ENCODE measurements at regions of chr10 and their contacts with region 1.

Region 1: DNA sequence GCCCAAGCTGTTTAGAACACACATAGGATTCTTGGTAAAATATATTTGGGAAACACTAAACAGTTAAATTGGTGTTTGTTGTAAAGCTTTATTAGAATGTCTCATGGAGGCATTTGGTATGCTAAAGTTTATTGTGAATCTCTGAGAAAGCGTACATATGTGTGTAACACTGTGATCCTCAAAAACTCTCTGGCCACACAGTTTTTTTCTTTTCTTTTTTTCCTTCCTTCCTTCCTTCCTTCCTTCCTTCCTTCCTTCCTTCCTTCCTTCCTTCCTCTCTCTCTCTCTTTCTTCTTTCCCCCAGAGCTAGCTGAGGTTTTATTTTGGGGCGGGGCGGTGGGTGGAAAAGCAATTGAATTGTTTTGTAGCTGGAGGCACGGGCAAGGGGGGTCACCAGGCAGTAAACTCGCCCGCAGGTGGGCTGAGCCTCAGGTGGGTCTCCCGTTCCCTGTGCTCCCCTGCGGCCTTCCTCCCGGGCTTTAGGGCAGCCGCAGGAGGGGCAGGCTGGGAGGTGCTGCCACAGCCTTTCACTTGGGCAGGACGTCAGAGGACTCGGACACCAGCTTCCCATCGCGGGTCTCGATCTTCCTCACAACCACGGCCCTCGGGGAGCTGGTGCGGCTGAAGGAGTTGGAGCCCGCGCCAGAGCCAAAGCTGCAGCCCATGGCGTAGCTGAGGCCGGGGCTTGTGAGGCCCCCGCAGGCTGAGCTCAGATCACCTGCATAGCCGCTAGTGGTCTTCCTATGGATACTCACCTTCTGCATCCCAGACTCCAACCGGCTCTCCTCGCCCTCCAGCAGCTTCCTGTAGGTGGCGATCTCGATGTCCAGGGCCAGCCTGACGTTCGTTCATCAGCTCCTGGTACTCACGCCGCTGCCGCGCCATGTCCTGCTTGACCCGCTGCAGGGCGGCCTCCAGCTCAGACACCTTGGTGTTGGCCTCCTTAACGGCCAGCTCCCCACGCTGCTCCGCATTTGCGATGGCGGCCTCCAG is 459.0 kb downstream of the GATA3 start:
- DNase-seq: peak; percentile 9 to 76
- H3K4me3 ChIP-seq: no peak overlapping the region
- H3K27ac ChIP-seq: no peak overlapping the region
- H3K4me1 ChIP-seq: peaks cover 0 to 9% (median 0%) of the 10 kb centered on the region in 4 experiments; a peak in 4 of 7 replicates
- H3K27me3 ChIP-seq: no peaks in the 10 kb centered on the region
- CTCF ChIP-seq: peak; percentile 55 to 75 (median 62)
- EP300 ChIP-seq: no peak
- POLR2A ChIP-seq: no peak
- RAD21 ChIP-seq: peak; percentile 56 to 66

Region 2: GRCh38 chr10:8502573-8502972 is 10.9 kb before region 1 on chr10:
- CTCF ChIA-PET with region 1: interaction called, 27 read pairs
- POLR2A ChIA-PET with region 1: no interaction called
- DNase-seq: no peak
- H3K4me3 ChIP-seq: no peak overlapping the region
- H3K27ac ChIP-seq: no peak overlapping the region
- H3K4me1 ChIP-seq: peaks cover 2 to 14% (median 11%) of the 10 kb centered on the region in 4 experiments
- H3K27me3 ChIP-seq: no peaks in the 10 kb centered on the region
- CTCF ChIP-seq: no peak
- EP300 ChIP-seq: no peak
- POLR2A ChIP-seq: no peak
- RAD21 ChIP-seq: no peak

Region 3: DNA sequence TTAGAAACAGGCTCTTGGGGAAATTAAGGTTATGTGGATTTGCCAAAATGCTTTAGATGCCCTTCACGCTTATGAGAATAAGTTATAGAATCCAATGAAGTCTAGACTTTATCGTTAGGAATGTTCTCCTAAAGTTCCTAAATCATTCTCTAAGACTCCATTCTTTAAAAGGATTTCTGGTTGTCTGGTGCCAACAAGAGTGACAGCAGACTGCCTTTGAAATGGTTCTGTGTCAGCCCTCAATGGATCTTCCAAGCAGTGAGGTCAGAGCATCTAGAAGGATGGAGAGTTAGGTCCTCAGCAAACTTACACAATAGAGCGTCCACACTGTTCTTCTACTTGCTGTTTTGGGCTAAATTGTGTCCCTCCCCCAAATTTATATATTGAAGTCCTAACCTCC is 14.3 kb after region 1 on chr10:
- CTCF ChIA-PET with region 1: interaction called, 16 read pairs
- POLR2A ChIA-PET with region 1: interaction called, 3 read pairs
- DNase-seq: no peak
- H3K4me3 ChIP-seq: no peak overlapping the region
- H3K27ac ChIP-seq: no peak overlapping the region
- H3K4me1 ChIP-seq: no peaks in the 10 kb centered on the region
- H3K27me3 ChIP-seq: no peaks in the 10 kb centered on the region
- CTCF ChIP-seq: no peak
- EP300 ChIP-seq: no peak
- POLR2A ChIP-seq: no peak
- RAD21 ChIP-seq: no peak

Region 4: DNA sequence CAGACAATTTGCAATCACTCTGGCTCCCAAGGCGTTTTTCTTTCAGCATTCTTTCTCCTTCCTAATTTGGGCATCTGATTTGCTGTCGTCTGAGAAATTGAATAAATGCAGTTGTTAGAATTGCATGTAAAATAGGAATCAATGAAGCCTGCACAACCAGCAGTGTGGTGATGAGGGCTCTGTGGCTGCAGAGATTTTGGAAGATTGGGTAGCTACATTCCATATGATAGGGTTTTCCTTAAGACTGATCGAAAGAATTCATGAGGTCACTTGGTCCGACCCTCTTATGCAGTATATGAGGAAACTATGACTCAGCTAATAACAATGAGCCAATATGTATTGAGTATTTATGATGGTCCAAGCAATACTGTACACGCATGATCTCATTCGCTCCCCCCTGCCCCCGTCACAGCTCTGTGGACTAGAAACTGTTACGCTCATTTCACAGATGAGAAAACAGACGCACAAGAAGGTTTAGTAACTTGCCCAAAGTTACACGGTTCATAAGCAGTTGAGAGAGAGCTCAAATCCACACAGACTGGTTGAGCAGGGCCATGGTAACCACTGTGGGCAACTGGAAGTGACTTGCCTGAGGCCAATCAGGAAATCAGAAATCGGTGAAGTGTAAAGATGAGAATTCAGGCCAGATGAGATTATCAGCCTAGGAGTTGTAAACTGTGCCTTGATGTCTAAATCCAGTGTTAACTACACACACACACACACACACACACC is 68.3 kb after region 1 on chr10:
- CTCF ChIA-PET with region 1: no interaction called
- POLR2A ChIA-PET with region 1: no interaction called
- DNase-seq: no peak
- H3K4me3 ChIP-seq: no peak overlapping the region
- H3K27ac ChIP-seq: no peak overlapping the region
- H3K4me1 ChIP-seq: no peaks in the 10 kb centered on the region
- H3K27me3 ChIP-seq: no peaks in the 10 kb centered on the region
- CTCF ChIP-seq: no peak
- EP300 ChIP-seq: no peak
- POLR2A ChIP-seq: no peak
- RAD21 ChIP-seq: no peak